ENCODE measurements at regions of chr3 and their contacts with region 1.

Region 1: DNA sequence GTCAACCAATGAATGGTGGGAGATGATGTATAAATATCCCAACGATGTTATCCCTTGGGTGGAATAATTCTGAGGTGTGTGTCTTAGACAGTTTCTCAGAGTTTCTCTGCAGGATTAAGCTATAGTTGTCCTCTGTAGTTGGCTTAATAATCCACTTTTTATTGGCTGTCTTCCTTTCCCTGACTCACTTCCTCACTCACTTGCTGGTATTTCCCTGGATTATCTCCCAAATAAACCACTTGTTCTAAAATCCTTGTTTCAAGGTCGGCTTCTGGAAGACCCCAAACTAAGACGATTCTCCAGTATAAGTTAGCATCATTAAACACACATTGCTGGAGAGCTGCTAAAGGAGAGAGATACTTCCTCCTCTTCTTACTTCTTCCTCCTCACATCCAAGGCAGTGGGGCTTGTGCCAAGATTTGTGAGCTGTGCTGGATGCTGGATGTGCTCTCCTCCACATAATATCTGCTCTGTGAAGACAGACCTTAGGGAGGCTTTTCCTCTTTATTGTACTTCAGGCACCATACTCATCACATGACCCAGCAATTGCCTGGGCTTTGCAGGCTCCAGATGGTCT is 22.5 kb upstream of the ROPN1 start:
- DNase-seq: no peak
- ATAC-seq: no peak
- H3K4me3 ChIP-seq: no peak overlapping the region
- H3K27ac ChIP-seq: no peak overlapping the region
- H3K4me1 ChIP-seq: no peaks in the 10 kb centered on the region
- H3K27me3 ChIP-seq: no peaks in the 10 kb centered on the region
- CTCF ChIP-seq: no peak
- EP300 ChIP-seq: no peak
- POLR2A ChIP-seq: no peak
- RAD21 ChIP-seq: no peak

Region 2: GRCh38 chr3:123993818-123994217 is 20.6 kb before region 1 on chr3:
- CTCF ChIA-PET with region 1: no interaction called
- POLR2A ChIA-PET with region 1: no interaction called
- RAD21 ChIA-PET with region 1: no interaction called
- SMC1A ChIA-PET with region 1: no interaction called
- in situ Hi-C with region 1: no loop called
- intact Hi-C with region 1: no loop called
- DNase-seq: no peak
- ATAC-seq: no peak
- H3K4me3 ChIP-seq: no peak overlapping the region
- H3K27ac ChIP-seq: no peak overlapping the region
- H3K4me1 ChIP-seq: no peaks in the 10 kb centered on the region
- H3K27me3 ChIP-seq: peaks cover 0 to 8% of the 10 kb centered on the region in 2 experiments
- CTCF ChIP-seq: no peak
- EP300 ChIP-seq: no peak
- POLR2A ChIP-seq: no peak
- RAD21 ChIP-seq: no peak

Region 3: GRCh38 chr3:124078953-124079911 is 64.8 kb after region 1 on chr3:
- CTCF ChIA-PET with region 1: interaction called, 21 read pairs
- POLR2A ChIA-PET with region 1: no interaction called
- RAD21 ChIA-PET with region 1: no interaction called
- SMC1A ChIA-PET with region 1: interaction called, 3 read pairs
- in situ Hi-C with region 1: no loop called
- intact Hi-C with region 1: loop called (anchors 5 kb)
- DNase-seq: no peak
- ATAC-seq: peak; percentile 64; the same call in 2 of the 3 replicates
- H3K4me3 ChIP-seq: no peak overlapping the region
- H3K27ac ChIP-seq: no peak overlapping the region
- H3K4me1 ChIP-seq: no peaks in the 10 kb centered on the region
- H3K27me3 ChIP-seq: peaks cover 0 to 5% of the 10 kb centered on the region in 2 experiments; a peak in 2 of 4 replicates
- CTCF ChIP-seq: peak; percentile 53 to 63 (median 59)
- EP300 ChIP-seq: no peak
- POLR2A ChIP-seq: no peak
- RAD21 ChIP-seq: peak; percentile 70

Region 4: GRCh38 chr3:124281453-124282316 is 267.2 kb after region 1 on chr3:
- CTCF ChIA-PET with region 1: interaction called, 22 read pairs
- POLR2A ChIA-PET with region 1: no interaction called
- RAD21 ChIA-PET with region 1: interaction called, 13 read pairs
- SMC1A ChIA-PET with region 1: interaction called, 12 read pairs
- in situ Hi-C with region 1: no loop called
- intact Hi-C with region 1: loop called (anchors 1 kb)
- DNase-seq: no peak
- ATAC-seq: peak; percentile 80
- H3K4me3 ChIP-seq: no peak overlapping the region
- H3K27ac ChIP-seq: no peak overlapping the region
- H3K4me1 ChIP-seq: no peaks in the 10 kb centered on the region
- H3K27me3 ChIP-seq: no peaks in the 10 kb centered on the region
- CTCF ChIP-seq: peak; percentile 53 to 64 (median 56); a peak in 5 of 6 replicates
- EP300 ChIP-seq: no peak
- POLR2A ChIP-seq: no peak
- RAD21 ChIP-seq: peak; percentile 64

Measured in GM12878 (cell line).